Right lobe of liver (tissue), 6 donors: ENCODE measurements at regions of chr12 and their contacts with region 1.

Region 1: GRCh38 chr12:131311764-131312163 is 358.1 kb downstream of the ADGRD1 start:
- DNase-seq: no peak
- ATAC-seq: no peak
- H3K4me3 ChIP-seq: no peak overlapping the region
- H3K27ac ChIP-seq: no peak overlapping the region
- H3K4me1 ChIP-seq: no peaks in the 10 kb centered on the region
- H3K27me3 ChIP-seq: no peaks in the 10 kb centered on the region
- CTCF ChIP-seq: no peak
- POLR2A ChIP-seq: no peak

Region 2: GRCh38 chr12:131441060-131441396 is 129.3 kb after region 1 on chr12:
- intact Hi-C with region 1: no loop called
- DNase-seq: no peak
- ATAC-seq: no peak
- H3K4me3 ChIP-seq: no peak overlapping the region
- H3K27ac ChIP-seq: no peak overlapping the region
- H3K4me1 ChIP-seq: no peaks in the 10 kb centered on the region
- H3K27me3 ChIP-seq: no peaks in the 10 kb centered on the region
- CTCF ChIP-seq: no peak
- POLR2A ChIP-seq: no peak

Region 3: DNA sequence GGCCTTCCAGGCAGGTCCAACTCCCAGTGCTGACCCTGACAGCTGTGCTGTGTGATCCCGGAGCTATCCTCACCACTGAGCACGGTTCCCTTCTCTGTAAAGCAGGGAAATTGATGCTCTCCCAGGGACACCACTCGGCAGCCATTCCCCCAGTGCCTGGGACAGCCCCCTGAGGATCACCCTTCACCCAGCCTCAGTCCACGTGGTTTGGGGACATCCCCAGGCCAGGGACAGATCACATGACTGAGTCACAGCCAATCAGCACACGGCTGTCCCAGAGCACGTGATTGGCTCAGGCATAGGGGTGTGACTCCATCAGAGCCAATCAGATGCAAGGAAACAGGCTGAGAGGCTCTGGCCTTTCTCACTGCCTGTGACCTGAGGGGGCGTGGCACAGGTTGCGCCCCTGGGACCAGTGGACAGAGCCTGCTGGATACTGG is 330.4 kb after region 1 on chr12:
- intact Hi-C with region 1: loop called in 1 of 2 experiments (anchors 5 kb)
- DNase-seq: no peak
- ATAC-seq: no peak
- H3K4me3 ChIP-seq: no peak overlapping the region
- H3K27ac ChIP-seq: no peak overlapping the region
- H3K4me1 ChIP-seq: no peaks in the 10 kb centered on the region
- H3K27me3 ChIP-seq: no peaks in the 10 kb centered on the region
- CTCF ChIP-seq: no peak
- POLR2A ChIP-seq: no peak